CD8-positive, alpha-beta memory T cell (primary cell): ENCODE measurements at regions of chr2 and their contacts with region 1.

Region 1: GRCh38 chr2:9423100-9423921 is at the starts of genes CPSF3 and ITGB1BP1:
- DNase-seq: peak; percentile 96 to 98 (median 98)
- H3K4me3 ChIP-seq: peak within 1 kb of the TSS; percentile 99
- H3K4me3 Mint-ChIP-seq: no peak within 1 kb of the TSS
- H3K27ac ChIP-seq: peak within 1 kb of the TSS; percentile 95
- H3K27ac Mint-ChIP-seq: peak within 1 kb of the TSS in 7 of 8 donors; percentile 80 to 98 (median 92)
- H3K4me1 ChIP-seq: peaks cover 29% of the 10 kb centered on the region
- H3K4me1 Mint-ChIP-seq: peaks cover 30 to 38% (median 37%) of the 10 kb centered on the region in 3 donors
- H3K27me3 ChIP-seq: no peaks in the 10 kb centered on the region
- H3K27me3 Mint-ChIP-seq: no peaks in the 10 kb centered on the region
- total RNA-seq, gene CPSF3: 79.0 to 83.9 TPM
- total RNA-seq, gene ITGB1BP1: 185 to 195 TPM

Region 2: DNA sequence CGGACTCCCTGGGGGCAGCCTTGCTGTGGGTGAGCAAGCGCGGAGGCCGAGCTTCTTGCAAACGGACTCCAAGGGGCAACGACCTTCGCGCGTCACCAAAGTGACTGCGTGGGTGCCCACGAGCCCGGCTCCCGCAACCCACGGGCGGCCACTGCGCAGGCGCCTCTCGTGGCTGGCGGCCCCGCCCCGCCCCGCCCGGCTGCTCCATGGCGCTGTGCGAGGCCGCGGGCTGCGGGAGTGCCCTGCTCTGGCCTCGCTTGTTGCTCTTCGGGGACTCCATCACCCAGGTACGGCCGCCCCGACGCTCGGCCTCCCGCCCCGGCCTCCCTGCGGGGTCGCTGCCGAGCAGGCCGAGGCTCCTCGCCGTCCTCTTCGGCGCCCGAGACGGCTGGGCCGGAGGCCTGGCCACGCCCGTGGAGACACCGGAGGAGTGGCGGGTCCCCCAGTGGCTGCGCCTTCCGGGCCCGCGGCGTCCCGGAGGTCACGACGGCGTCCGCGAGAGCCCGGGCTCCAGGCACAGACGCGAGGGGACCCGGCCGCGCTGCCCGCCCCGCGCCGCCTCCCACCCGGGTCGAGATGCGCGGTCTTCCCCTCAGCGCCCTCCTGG is 51.2 kb after region 1 on chr2 and contains the start of gene IAH1:
- CTCF ChIA-PET with region 1: interaction called, 5 read pairs
- POLR2A ChIA-PET with region 1: interaction called, 28 read pairs
- DNase-seq: peak; percentile 71 to 86 (median 75)
- H3K4me3 ChIP-seq: peak within 1 kb of the TSS; percentile 42
- H3K4me3 Mint-ChIP-seq: peak within 1 kb of the TSS; percentile 83 to 93 (median 84)
- H3K27ac ChIP-seq: peak within 1 kb of the TSS; percentile 90
- H3K27ac Mint-ChIP-seq: peak within 1 kb of the TSS; percentile 89 to 98 (median 92)
- H3K4me1 ChIP-seq: peaks cover 39% of the 10 kb centered on the region
- H3K4me1 Mint-ChIP-seq: peaks cover 39 to 60% (median 53%) of the 10 kb centered on the region in 3 donors
- H3K27me3 ChIP-seq: no peaks in the 10 kb centered on the region
- H3K27me3 Mint-ChIP-seq: no peaks in the 10 kb centered on the region
- total RNA-seq, gene IAH1: 76.9 to 79.1 TPM

Region 3: DNA sequence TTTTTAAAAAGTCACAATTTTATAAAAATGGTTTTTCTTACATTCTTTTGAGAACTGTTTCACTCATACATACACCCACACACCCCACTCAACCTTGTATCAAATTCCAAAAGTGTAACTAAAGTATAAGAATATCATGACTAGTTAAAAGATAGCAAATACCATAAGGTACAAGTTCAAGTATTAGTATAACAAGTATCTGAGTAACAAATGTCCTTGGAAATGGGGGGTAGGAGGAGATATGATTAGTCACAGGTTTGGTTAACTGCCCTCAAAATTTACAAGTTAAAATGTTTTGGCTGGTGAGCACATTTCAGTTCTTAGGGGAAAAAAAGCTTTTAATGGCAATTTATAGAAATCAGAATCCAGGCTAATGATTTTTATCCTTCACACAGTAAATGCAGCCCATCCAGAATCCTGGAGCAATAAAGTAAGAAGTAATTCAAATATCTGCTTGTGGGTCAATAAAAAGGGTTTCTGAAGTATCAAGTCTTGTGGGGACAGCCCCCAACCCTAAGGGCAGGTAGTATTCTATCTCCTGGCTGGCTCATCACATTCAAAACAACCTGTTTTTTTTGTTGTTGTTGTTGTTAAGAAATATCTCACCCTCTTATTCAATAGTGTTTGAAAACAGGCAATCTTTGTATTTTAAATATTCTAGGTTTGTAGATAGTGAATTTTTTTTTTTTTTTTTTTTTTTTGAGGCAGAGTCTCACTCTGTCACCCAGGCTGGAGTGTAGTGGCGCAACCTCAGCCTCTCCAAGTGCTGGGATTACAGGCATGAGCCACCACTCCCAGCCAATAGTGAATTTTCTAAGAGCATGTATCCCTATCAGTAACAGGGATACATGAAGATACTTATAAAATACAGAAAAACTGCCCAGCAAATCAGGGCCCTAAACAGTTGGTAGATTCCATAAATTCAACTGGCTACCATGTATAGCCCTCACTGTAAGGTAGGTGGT is 65.6 kb after region 1 on chr2:
- CTCF ChIA-PET with region 1: no interaction called
- POLR2A ChIA-PET with region 1: no interaction called
- DNase-seq: no peak
- H3K4me3 ChIP-seq: no peak overlapping the region
- H3K4me3 Mint-ChIP-seq: no peak overlapping the region
- H3K27ac ChIP-seq: no peak overlapping the region
- H3K27ac Mint-ChIP-seq: peak overlapping the region in 6 of 8 donors; percentile 29 to 64 (median 48)
- H3K4me1 ChIP-seq: no peaks in the 10 kb centered on the region
- H3K4me1 Mint-ChIP-seq: peaks cover 3 to 11% (median 9%) of the 10 kb centered on the region in 3 donors
- H3K27me3 ChIP-seq: no peaks in the 10 kb centered on the region
- H3K27me3 Mint-ChIP-seq: no peaks in the 10 kb centered on the region